Natural killer cell (primary cell): ENCODE measurements at regions of chr9 and their contacts with region 1.

Region 1: GRCh38 chr9:129932303-129933151 is 97.3 kb downstream of the USP20 start:
- DNase-seq: peak in 1 of 2 donors; percentile 57
- ATAC-seq: peak in 1 of 3 donors; percentile 57
- H3K4me3 ChIP-seq: no peak overlapping the region
- H3K4me3 Mint-ChIP-seq: peak overlapping the region; percentile 57
- H3K27ac ChIP-seq: peak overlapping the region; percentile 26
- H3K27ac Mint-ChIP-seq: peak overlapping the region; percentile 78 to 88
- H3K4me1 ChIP-seq: peaks cover 32% of the 10 kb centered on the region
- H3K4me1 Mint-ChIP-seq: peaks cover 37 to 41% of the 10 kb centered on the region in 2 donors
- H3K27me3 ChIP-seq: no peaks in the 10 kb centered on the region
- H3K27me3 Mint-ChIP-seq: no peaks in the 10 kb centered on the region
- CTCF ChIP-seq: no peak

Region 2: DNA sequence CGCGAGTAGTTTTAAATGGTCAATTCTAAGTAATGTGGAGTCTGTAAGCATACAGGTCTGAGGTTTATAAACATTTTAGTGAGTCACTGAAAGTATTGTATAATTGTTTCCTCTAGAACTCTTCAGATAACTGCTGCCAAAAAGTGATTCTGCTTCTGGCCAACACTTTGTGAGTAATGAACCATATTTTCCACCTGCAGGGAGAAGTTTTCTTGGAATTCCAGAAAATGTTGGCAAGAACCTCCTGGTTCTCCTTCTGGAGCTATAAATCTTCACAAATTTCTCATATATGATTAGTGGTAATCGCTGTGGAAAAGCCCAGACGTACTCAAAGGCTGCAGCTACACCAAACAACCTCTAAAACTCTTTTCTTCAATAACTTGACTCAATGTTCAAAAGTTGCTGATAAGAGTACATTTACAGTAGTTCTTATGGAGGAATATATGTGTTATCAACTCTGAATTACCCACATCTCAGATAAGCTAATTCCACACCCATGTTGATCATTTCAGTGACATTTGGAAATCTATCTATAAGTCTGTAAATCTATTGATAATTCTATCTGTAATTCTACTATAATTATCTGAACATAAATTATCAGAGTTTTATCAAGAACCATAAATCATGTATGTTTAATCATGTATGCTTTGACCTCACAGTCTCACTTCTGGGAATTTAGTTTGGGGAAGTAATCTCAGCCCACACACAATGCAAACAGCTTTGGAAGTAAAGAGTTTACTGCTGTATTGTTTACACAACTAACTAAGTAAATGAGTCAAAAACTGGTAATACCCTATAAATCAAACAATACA is 36.4 kb after region 1 on chr9:
- intact Hi-C with region 1: loop called (anchors 5 kb)
- DNase-seq: no peak
- ATAC-seq: no peak
- H3K4me3 ChIP-seq: no peak overlapping the region
- H3K4me3 Mint-ChIP-seq: no peak overlapping the region
- H3K27ac ChIP-seq: no peak overlapping the region
- H3K27ac Mint-ChIP-seq: peak overlapping the region; percentile 66 to 69
- H3K4me1 ChIP-seq: peaks cover 5% of the 10 kb centered on the region
- H3K4me1 Mint-ChIP-seq: peaks cover 28 to 29% of the 10 kb centered on the region in 2 donors
- H3K27me3 ChIP-seq: no peaks in the 10 kb centered on the region
- H3K27me3 Mint-ChIP-seq: no peaks in the 10 kb centered on the region
- CTCF ChIP-seq: no peak